K562 (cell line): ENCODE measurements at regions of chr14 and their contacts with region 1.

Region 1: GRCh38 chr14:76918751-76919543 is 92.7 kb downstream of the LRRC74A start:
- DNase-seq: peak; percentile 80 to 84 (median 81)
- ATAC-seq: peak; percentile 94
- H3K4me3 ChIP-seq: no peak overlapping the region
- H3K27ac ChIP-seq: peak overlapping the region; percentile 62; the same call in 2 of the 3 replicates
- H3K4me1 ChIP-seq: peaks cover 28 to 41% of the 10 kb centered on the region in 2 experiments
- H3K27me3 ChIP-seq: no peaks in the 10 kb centered on the region
- CTCF ChIP-seq: 0 out of 6 replicates have a peak, but pooled peaks of 1 of the 3 experiments have one; percentile 3
- EP300 ChIP-seq: peak; percentile 15; the same call in 1 of the 2 replicates
- POLR2A ChIP-seq: no peak
- RAD21 ChIP-seq: no peak

Region 2: DNA sequence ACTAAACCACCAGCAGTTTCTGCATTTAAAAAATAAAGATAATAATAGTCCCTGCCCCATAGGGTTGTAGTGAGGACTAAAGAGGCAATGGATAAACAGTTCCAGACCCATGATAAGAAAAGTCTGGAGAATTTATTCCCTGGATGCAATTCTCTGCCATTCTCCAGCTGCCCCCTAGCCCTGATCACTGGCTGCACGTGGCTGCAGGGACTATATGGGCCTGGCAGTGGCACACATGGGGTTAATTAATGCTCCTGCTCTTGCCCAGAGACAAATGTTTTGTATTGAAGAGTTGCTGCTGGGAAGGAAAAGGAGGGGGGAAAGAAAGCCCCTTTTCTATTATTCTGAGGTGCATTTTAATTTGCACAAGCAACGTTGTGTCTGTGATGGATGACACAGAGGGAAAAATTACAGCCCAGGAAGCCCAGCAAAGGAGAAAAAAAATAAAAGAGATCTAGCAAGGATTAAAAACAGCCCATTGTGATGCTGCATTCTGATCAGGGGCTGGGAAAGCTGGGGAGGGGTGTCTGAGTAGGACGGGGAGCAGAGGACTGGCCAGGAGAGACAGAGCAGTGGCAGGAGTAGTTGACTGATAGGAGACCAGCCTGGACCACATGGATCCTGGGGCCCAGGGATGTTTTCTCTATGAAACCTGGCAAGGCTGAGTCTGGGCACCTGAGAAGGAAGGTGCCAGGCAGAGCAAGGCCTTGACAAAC is 393.7 kb before region 1 on chr14:
- CTCF ChIA-PET with region 1: no interaction called
- POLR2A ChIA-PET with region 1: no interaction called
- in situ Hi-C with region 1: no loop called
- intact Hi-C with region 1: no loop called
- DNase-seq: no peak
- ATAC-seq: no peak
- H3K4me3 ChIP-seq: no peak overlapping the region
- H3K27ac ChIP-seq: no peak overlapping the region
- H3K4me1 ChIP-seq: no peaks in the 10 kb centered on the region
- H3K27me3 ChIP-seq: peaks cover 2 to 24% of the 10 kb centered on the region in 2 experiments; a peak in 3 of 5 replicates
- CTCF ChIP-seq: no peak
- EP300 ChIP-seq: no peak
- POLR2A ChIP-seq: no peak
- RAD21 ChIP-seq: no peak

Region 3: DNA sequence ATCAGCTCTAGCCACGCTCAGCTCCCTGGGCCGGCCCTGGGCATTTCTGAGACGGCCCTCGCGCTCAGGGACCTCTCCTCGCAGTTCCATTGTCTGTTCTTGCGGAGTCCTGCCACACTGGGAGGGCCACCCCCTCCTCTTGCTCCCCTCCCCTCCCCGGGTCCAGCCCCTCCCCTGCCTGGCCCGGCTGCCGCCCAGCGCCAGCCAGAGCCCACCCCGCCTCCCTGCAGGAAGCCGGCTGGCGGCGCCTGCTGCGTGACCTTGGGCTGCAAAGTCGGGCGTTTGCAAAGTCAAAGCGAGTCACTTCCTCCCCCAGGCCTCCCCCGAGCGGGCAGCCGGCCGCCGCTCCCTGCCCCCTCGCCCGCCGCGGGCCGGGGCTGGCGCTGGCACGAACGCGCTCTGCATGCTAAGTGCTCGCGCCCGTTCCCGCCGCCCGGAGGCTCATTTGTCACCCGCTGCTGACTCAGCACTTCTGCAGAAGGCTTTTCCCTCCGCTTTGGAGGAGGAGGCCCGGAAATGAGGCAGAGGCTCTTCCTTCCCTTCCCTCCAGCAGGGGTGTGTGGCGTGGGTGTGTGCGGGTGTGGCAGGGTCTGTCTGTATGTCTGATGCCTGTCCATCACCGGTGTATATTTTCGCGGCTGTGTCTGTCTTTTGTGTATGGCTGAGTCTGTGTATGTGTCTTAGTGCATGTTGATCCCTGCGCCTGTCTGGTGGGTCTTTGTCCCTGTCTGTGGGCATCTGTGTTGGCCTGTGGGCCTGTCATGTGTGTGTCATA is 37.6 kb after region 1 on chr14:
- CTCF ChIA-PET with region 1: no interaction called
- POLR2A ChIA-PET with region 1: no interaction called
- in situ Hi-C with region 1: no loop called
- intact Hi-C with region 1: loop called (anchors 5 kb)
- DNase-seq: peak; percentile 78 to 93 (median 79)
- ATAC-seq: peak; percentile 85
- H3K4me3 ChIP-seq: peak overlapping the region; percentile 42
- H3K27ac ChIP-seq: peak overlapping the region; percentile 88
- H3K4me1 ChIP-seq: peaks cover 56 to 63% of the 10 kb centered on the region in 2 experiments
- H3K27me3 ChIP-seq: no peaks in the 10 kb centered on the region
- CTCF ChIP-seq: no peak
- EP300 ChIP-seq: peak; percentile 75
- POLR2A ChIP-seq: peak; percentile 55
- RAD21 ChIP-seq: 0 out of 4 replicates have a peak, but pooled peaks of 1 of the 2 experiments have one; percentile 5

Region 4: GRCh38 chr14:77028384-77029231 is 109.7 kb after region 1 on chr14 and contains the start of gene IRF2BPL:
- CTCF ChIA-PET with region 1: no interaction called
- POLR2A ChIA-PET with region 1: interaction called, 4 read pairs
- in situ Hi-C with region 1: no loop called
- intact Hi-C with region 1: loop called (anchors 10 kb)
- DNase-seq: peak; percentile 91 to 96 (median 94)
- ATAC-seq: peak; percentile 80
- H3K4me3 ChIP-seq: peak within 1 kb of the TSS; percentile 65
- H3K27ac ChIP-seq: peak within 1 kb of the TSS; percentile 95
- H3K4me1 ChIP-seq: peaks cover 16 to 62% of the 10 kb centered on the region in 2 experiments; a peak in 4 of 5 replicates
- H3K27me3 ChIP-seq: no peaks in the 10 kb centered on the region
- CTCF ChIP-seq: no peak
- EP300 ChIP-seq: no peak
- POLR2A ChIP-seq: no peak; the same call in 1 of the 2 replicates
- RAD21 ChIP-seq: 0 out of 4 replicates have a peak, but pooled peaks of 1 of the 2 experiments have one; percentile 6
- polyA plus RNA-seq, gene IRF2BPL: 0.52 to 0.75 TPM

Region 5: DNA sequence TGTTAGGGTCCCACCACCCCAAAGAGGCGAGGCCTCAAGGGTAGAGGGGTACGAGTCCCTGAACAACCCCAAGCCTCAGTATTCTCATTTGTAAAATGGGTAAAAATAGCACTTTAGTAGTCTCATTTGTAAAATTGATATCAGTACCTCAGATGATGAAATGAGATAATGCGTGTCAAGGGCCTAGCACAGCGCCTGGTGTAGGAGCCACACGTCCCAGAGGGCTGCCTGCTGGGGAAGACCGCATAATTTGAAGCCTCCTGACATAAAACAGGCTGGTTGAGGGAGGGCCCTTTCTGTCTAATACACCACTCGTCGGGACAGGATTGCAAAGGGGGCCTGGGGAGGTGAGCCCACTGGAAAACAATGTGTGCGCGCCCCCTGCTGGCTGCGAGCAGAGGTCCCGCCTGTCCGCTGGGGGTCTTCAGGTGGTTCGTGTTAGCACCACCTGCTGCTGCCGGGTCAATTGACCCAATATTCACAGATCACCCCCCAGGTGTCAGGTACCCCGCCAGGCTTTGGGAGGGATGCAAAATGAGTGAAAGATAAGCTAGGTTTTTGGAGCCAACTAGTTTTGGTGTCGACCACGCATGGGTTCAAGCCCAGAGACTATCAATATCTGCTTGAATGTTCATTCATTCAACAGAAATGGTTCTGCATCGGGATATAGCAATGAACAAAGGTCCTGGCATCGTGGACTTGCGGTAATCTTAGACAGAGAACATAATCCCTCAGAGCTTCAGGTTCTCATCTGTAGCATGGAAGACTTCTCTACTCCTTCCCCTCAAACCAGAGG is 134.3 kb after region 1 on chr14:
- CTCF ChIA-PET with region 1: interaction called, 28 read pairs
- POLR2A ChIA-PET with region 1: no interaction called
- in situ Hi-C with region 1: loop called (anchors 5 kb)
- intact Hi-C with region 1: no loop called
- DNase-seq: peak; percentile 71 to 78 (median 74)
- ATAC-seq: peak; percentile 95
- H3K4me3 ChIP-seq: no peak overlapping the region
- H3K27ac ChIP-seq: no peak overlapping the region
- H3K4me1 ChIP-seq: peaks cover 1 to 8% of the 10 kb centered on the region in 2 experiments; a peak in 3 of 5 replicates
- H3K27me3 ChIP-seq: no peaks in the 10 kb centered on the region
- CTCF ChIP-seq: peak; percentile 86 to 97 (median 90)
- EP300 ChIP-seq: no peak
- POLR2A ChIP-seq: no peak
- RAD21 ChIP-seq: peak; percentile 89 to 96

Region 6: DNA sequence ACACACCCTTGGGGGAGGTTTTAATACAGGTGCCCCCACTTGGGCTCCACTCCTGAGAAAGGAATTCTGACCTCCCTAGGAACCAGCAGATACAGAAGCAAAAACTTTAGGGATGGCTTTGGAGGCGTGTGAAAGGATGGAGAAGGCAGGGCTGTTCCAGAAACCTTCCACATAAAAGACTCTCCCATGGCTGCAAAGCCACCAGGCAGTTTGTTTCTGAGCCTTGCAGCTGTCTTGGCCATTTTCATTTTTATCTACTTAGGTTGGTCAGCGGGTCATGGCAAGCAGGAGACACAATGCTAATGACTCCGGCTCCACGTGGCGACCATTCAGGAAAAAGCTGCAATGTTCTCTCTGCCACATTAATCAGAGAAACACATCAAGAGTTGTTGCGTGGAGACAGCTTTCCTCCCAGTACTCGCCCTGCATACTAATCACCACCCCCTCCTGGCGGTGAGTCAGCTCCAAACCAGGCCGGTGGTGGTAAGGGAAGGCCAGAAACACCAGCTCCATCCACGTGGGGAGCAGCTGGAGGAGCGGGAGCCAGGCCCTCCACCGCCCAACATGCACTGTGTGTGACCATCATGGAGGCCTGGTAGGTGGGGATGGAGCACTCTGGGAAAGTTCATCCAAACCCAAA is 140.4 kb after region 1 on chr14:
- CTCF ChIA-PET with region 1: interaction called, 28 read pairs
- POLR2A ChIA-PET with region 1: no interaction called
- in situ Hi-C with region 1: loop called (anchors 5 kb)
- intact Hi-C with region 1: no loop called
- DNase-seq: peak; percentile 75 to 80 (median 77)
- ATAC-seq: peak; percentile 99
- H3K4me3 ChIP-seq: no peak overlapping the region
- H3K27ac ChIP-seq: no peak overlapping the region
- H3K4me1 ChIP-seq: peaks cover 6 to 7% of the 10 kb centered on the region in 2 experiments; a peak in 3 of 5 replicates
- H3K27me3 ChIP-seq: peaks cover 0 to under 1% of the 10 kb centered on the region in 2 experiments; a peak in 1 of 5 replicates
- CTCF ChIP-seq: peak; percentile 56 to 67 (median 61); a peak in 5 of 6 replicates
- EP300 ChIP-seq: no peak
- POLR2A ChIP-seq: no peak
- RAD21 ChIP-seq: peak; percentile 60 to 63

Region 7: GRCh38 chr14:77111043-77111442 is 192.1 kb after region 1 on chr14:
- CTCF ChIA-PET with region 1: no interaction called
- POLR2A ChIA-PET with region 1: no interaction called
- in situ Hi-C with region 1: no loop called
- intact Hi-C with region 1: no loop called
- DNase-seq: no peak
- ATAC-seq: no peak
- H3K4me3 ChIP-seq: no peak overlapping the region
- H3K27ac ChIP-seq: no peak overlapping the region
- H3K4me1 ChIP-seq: no peaks in the 10 kb centered on the region
- H3K27me3 ChIP-seq: no peaks in the 10 kb centered on the region
- CTCF ChIP-seq: no peak
- EP300 ChIP-seq: no peak
- POLR2A ChIP-seq: no peak
- RAD21 ChIP-seq: no peak